ENCODE measurements at regions of chr2 and their contacts with region 1.

Region 1: GRCh38 chr2:54106631-54107454 is 8.6 kb upstream of the ACYP2 start:
- DNase-seq: peak; percentile 66
- ATAC-seq: peak; percentile 86
- H3K4me3 ChIP-seq: no peak overlapping the region
- H3K27ac ChIP-seq: no peak overlapping the region
- H3K4me1 ChIP-seq: peaks cover 3% of the 10 kb centered on the region
- H3K27me3 ChIP-seq: no peaks in the 10 kb centered on the region
- CTCF ChIP-seq: peak; percentile 83
- POLR2A ChIP-seq: no peak
- RAD21 ChIP-seq: peak; percentile 82

Region 2: DNA sequence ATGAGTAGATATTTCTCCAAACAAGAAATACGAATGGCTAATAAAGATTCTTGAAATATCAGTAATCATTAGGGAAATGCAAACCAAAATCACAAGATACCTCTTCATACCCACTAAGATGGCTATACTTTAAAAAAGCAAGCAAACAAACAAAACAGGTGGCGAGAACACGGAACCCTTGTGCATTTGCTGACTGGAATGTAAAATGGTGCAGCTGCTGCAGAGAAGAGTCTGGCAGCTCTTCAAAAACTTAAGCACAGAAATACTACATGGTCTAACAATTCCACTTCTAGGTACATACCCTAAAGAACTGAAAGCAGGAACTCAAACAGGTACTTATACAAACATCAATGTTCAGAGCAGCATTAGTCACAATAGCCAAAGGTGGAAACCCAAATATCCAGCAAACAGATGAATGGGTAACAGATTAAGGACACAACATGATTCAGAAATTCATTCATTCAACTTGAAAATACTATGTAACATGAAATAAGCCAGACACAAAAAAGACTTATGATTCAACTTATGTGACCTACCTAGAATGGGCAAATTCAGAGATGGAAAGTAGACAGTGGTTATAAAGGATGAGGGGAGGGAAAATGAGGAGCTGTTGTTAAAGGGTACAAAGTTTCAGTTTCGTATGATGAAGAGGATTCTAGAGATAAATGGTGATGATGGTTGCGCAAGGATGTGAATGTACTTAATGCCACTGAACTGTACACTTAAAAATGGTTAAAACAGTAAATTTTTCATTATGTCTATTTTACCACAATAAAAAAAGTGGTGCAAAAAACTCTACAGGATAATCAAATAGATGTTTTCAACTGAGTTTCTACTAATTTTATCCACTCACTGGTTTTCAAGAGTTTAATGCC is 220.2 kb before region 1 on chr2:
- CTCF ChIA-PET with region 1: no interaction called
- POLR2A ChIA-PET with region 1: no interaction called
- dilution Hi-C with region 1: no loop called
- in situ Hi-C with region 1: no loop called
- intact Hi-C with region 1: no loop called
- DNase-seq: no peak
- ATAC-seq: no peak
- H3K4me3 ChIP-seq: no peak overlapping the region
- H3K27ac ChIP-seq: no peak overlapping the region
- H3K4me1 ChIP-seq: no peaks in the 10 kb centered on the region
- H3K27me3 ChIP-seq: no peaks in the 10 kb centered on the region
- CTCF ChIP-seq: no peak
- POLR2A ChIP-seq: no peak
- RAD21 ChIP-seq: no peak

Region 3: DNA sequence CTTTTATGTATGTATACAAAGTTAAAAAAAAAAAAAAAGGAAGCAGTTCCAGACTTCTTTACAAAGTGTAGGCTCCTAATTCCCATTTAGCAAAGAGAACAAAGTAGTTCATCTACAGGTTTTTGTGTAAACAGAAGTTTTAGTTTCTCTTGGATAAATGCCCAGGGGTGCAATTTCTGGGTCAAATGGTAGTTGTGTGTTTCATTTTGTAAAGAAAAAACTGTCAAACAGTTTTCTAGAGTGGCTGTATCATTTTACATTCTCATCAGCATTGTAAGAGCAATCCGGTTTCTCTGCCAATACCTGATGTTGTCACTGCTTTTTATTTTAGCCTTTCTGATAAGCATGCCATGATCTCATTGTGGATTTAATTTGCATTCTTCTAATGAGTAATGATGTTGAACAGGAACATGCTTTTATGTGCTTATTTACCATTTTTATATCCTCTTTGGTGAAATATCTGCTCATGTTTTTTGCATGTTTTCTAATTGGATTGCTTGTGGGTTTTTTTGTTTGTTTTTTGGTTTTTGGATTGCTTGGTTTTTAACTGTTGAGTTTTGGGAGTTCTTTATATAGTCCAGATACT is 119.4 kb before region 1 on chr2:
- CTCF ChIA-PET with region 1: no interaction called
- POLR2A ChIA-PET with region 1: interaction called, 19 read pairs
- dilution Hi-C with region 1: no loop called
- in situ Hi-C with region 1: no loop called
- intact Hi-C with region 1: no loop called
- DNase-seq: peak; percentile 82
- ATAC-seq: peak; percentile 78
- H3K4me3 ChIP-seq: no peak overlapping the region
- H3K27ac ChIP-seq: no peak overlapping the region
- H3K4me1 ChIP-seq: 0 out of 2 replicates have a peak, but pooled peaks cover 2% of the 10 kb centered on the region
- H3K27me3 ChIP-seq: no peaks in the 10 kb centered on the region
- CTCF ChIP-seq: no peak
- POLR2A ChIP-seq: no peak
- RAD21 ChIP-seq: no peak

Region 4: GRCh38 chr2:54330162-54330925 is 223.5 kb after region 1 on chr2:
- CTCF ChIA-PET with region 1: no interaction called
- POLR2A ChIA-PET with region 1: no interaction called
- dilution Hi-C with region 1: no loop called
- in situ Hi-C with region 1: no loop called
- intact Hi-C with region 1: loop called (anchors 10 kb)
- DNase-seq: peak; percentile 92
- ATAC-seq: peak; percentile 99
- H3K4me3 ChIP-seq: peak overlapping the region; percentile 78
- H3K27ac ChIP-seq: peak overlapping the region; percentile 70
- H3K4me1 ChIP-seq: peaks cover 3% of the 10 kb centered on the region
- H3K27me3 ChIP-seq: no peaks in the 10 kb centered on the region
- CTCF ChIP-seq: no peak
- POLR2A ChIP-seq: peak; percentile 68
- RAD21 ChIP-seq: no peak

Region 5: GRCh38 chr2:54444503-54444902 is 337.7 kb after region 1 on chr2:
- CTCF ChIA-PET with region 1: no interaction called
- POLR2A ChIA-PET with region 1: no interaction called
- dilution Hi-C with region 1: no loop called
- in situ Hi-C with region 1: no loop called
- intact Hi-C with region 1: no loop called
- DNase-seq: no peak
- ATAC-seq: no peak
- H3K4me3 ChIP-seq: no peak overlapping the region
- H3K27ac ChIP-seq: no peak overlapping the region
- H3K4me1 ChIP-seq: 0 out of 2 replicates have a peak, but pooled peaks cover 2% of the 10 kb centered on the region
- H3K27me3 ChIP-seq: no peaks in the 10 kb centered on the region; the same call in none of the 2 replicates
- CTCF ChIP-seq: no peak
- POLR2A ChIP-seq: no peak
- RAD21 ChIP-seq: no peak

Region 6: DNA sequence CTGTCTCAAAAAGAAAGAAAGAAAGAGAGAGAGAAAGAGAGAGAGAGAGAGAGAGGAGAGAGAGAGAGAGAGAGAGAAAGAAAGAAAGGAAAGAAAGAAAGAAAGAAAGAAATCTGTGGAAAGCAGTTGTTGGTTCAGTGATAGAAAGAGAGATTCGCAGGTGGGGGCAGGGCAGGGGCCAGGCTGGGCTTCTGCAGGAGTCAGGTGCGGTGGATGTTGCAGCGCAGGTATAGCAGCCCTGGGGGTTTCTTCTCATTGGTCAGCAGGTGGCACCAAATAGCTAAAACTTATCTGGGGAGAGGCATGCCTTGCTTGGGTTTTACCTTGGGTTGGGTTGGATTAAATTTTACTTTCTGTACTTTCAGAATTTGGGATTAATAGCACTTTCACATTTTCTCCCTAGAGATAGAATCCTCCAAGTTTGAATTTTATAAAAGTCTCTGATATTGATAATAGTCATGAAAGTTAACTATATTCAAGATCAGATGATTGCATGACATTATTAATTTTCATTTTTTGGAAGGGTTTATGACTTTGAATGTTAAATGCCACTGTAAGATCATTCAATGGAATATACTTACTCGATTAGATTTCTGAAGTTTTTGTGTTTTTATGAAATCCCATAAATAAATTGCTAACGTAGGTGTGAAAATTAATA is 415.9 kb after region 1 on chr2:
- CTCF ChIA-PET with region 1: interaction called, 3 read pairs
- POLR2A ChIA-PET with region 1: no interaction called
- dilution Hi-C with region 1: no loop called
- in situ Hi-C with region 1: no loop called
- intact Hi-C with region 1: loop called (anchors 5 kb)
- DNase-seq: peak; percentile 59
- ATAC-seq: no peak
- H3K4me3 ChIP-seq: no peak overlapping the region
- H3K27ac ChIP-seq: no peak overlapping the region
- H3K4me1 ChIP-seq: peaks cover 12% of the 10 kb centered on the region
- H3K27me3 ChIP-seq: no peaks in the 10 kb centered on the region
- CTCF ChIP-seq: peak; percentile 61
- POLR2A ChIP-seq: no peak
- RAD21 ChIP-seq: peak; percentile 75

Region 7: GRCh38 chr2:54838585-54839035 is 731.8 kb after region 1 on chr2:
- CTCF ChIA-PET with region 1: no interaction called
- POLR2A ChIA-PET with region 1: no interaction called
- dilution Hi-C with region 1: no loop called
- in situ Hi-C with region 1: loop called (anchors 5 kb)
- intact Hi-C with region 1: loop called (anchors 1 kb)
- DNase-seq: peak; percentile 68
- ATAC-seq: peak; percentile 95
- H3K4me3 ChIP-seq: no peak overlapping the region
- H3K27ac ChIP-seq: no peak overlapping the region
- H3K4me1 ChIP-seq: no peaks in the 10 kb centered on the region; the same call in 1 of the 2 replicates
- H3K27me3 ChIP-seq: peaks cover 18% of the 10 kb centered on the region
- CTCF ChIP-seq: peak; percentile 80
- POLR2A ChIP-seq: no peak
- RAD21 ChIP-seq: peak; percentile 67

Region 8: DNA sequence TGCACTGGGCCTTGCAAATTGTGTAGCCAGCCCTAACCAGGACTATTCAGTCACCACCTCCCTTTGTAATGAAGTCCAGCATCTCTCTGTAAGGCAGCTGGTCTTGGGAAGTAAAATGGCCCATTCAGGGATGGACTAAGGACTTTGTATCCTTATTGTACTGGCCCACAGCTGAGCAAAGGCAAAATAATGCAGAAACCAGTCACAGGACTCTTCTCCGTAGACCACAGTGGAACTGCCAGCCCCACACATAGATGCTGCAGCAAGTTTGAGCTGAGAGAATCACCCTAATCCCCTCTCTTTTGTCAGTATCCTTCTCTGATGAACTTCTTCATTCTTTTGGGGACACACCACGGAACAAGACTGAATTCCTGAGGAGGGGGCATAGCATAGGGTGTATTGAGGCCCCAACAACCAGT is 1017.0 kb after region 1 on chr2:
- CTCF ChIA-PET with region 1: no interaction called
- POLR2A ChIA-PET with region 1: no interaction called
- dilution Hi-C with region 1: no loop called
- in situ Hi-C with region 1: no loop called
- intact Hi-C with region 1: no loop called
- DNase-seq: no peak
- ATAC-seq: no peak
- H3K4me3 ChIP-seq: no peak overlapping the region
- H3K27ac ChIP-seq: no peak overlapping the region
- H3K4me1 ChIP-seq: peaks cover 15% of the 10 kb centered on the region
- H3K27me3 ChIP-seq: no peaks in the 10 kb centered on the region
- CTCF ChIP-seq: no peak
- POLR2A ChIP-seq: no peak
- RAD21 ChIP-seq: no peak